Activated CD8-positive, alpha-beta T cell treated with anti-CD3 and anti-CD28 coated beads for 36 hours (primary cell): ENCODE measurements at regions of chr6 and their contacts with region 1.

Region 1: DNA sequence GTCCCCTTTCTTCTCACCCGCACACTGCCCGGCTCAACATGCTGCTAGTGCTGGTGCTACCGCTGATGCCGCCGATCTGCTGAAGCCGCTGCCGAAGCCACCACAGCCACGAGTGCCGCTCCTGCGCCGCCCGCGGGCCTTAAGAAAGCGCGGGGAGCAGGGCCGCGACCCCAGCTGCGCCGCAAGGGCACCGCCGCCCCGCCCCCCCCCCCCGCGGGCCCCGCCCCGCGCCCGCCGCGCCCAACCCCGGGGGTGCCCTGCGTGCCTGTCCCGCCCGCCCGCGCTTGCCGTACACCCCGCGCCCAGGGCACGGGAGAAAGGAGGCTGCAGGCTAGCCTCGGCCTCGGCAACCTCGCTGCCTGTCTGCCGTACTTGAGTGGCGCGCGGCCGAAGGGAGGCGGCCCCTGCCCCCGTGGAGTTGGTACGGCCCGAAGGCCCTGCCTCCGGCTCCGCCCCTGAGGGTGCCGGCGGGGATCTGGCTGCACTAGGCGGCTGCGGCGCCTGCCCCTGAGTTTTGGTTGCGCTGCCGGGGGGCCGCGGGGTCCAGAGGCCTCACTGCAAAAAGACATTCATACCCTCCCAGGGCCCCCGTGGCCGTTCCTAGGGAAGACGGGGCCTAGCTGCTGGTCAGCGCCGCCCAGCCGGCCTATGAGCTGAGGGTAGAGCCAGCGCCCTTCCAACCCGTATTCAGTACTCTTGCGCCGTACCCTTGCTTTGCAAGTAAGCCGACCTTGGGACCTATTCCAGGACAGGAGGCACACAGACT is at the start of gene SOD2:
- DNase-seq: peak; percentile 85
- ATAC-seq: peak; percentile 81
- H3K4me3 Mint-ChIP-seq: peak within 1 kb of the TSS; percentile 88
- H3K27ac Mint-ChIP-seq: peak within 1 kb of the TSS; percentile 93
- H3K4me1 Mint-ChIP-seq: peaks cover 33% of the 10 kb centered on the region
- H3K27me3 Mint-ChIP-seq: no peaks in the 10 kb centered on the region
- CTCF ChIP-seq: no peak
- total RNA-seq, gene SOD2: 95.5 to 105 TPM

Region 2: DNA sequence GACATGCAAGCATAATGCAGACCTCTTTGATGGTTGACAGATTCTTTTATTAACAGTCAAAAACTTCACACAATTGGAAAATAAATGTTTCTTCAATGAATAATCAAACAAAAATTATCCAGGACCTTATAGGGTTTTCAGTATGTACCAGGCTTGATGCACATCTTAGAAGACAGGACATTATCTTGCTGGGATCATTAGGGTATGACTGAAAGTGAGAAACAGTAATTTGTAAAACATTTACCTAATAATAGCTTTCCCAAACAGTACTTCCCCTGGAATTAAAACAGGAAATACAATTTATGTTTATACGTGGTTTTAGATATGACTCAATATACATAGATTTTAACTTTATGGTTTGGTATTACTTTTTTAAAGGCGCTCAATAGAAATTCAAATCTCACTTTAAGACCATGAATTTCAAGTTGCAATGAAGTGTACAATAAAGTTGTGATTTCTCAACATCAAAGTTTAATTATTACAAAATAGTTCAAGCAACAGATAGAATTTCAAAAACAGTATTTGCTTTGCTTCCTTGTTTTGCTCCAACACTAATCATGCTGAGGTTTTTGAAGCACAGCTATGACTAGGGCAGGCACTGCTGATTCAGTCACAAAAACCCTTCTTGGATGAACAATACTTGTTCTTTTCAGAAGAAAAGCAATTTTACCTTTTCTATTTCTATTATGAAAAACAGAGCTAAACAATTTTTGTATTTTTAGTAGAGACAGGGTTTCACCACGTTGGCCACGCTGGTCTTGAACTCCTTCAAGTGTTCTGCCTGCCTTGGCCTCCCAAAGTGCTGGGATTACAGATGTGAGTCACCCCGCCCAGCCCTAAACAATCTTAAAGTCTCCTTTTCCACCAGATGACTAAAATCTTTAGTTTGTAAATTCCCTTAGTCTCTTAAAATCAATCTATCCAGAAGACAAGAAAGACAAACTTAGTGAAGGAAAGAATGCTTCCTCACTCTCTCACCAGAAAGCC is 13.9 kb before region 1 on chr6:
- CTCF ChIA-PET with region 1: interaction called, 11 read pairs
- POLR2A ChIA-PET with region 1: interaction called, 27 read pairs
- intact Hi-C with region 1: no loop called
- DNase-seq: peak; percentile 30
- ATAC-seq: peak; percentile 64
- H3K4me3 Mint-ChIP-seq: no peak overlapping the region
- H3K27ac Mint-ChIP-seq: peak overlapping the region; percentile 65
- H3K4me1 Mint-ChIP-seq: peaks cover 21% of the 10 kb centered on the region
- H3K27me3 Mint-ChIP-seq: no peaks in the 10 kb centered on the region
- CTCF ChIP-seq: no peak

Region 3: GRCh38 chr6:159726918-159727716 is 33.8 kb after region 1 on chr6 and contains the start of gene WTAP:
- CTCF ChIA-PET with region 1: interaction called, 23 read pairs
- POLR2A ChIA-PET with region 1: interaction called, 41 read pairs
- intact Hi-C with region 1: loop called (anchors 2 kb)
- DNase-seq: peak; percentile 97
- ATAC-seq: peak; percentile 93
- H3K4me3 Mint-ChIP-seq: peak within 1 kb of the TSS; percentile 85
- H3K27ac Mint-ChIP-seq: peak within 1 kb of the TSS; percentile 95
- H3K4me1 Mint-ChIP-seq: peaks cover 44% of the 10 kb centered on the region
- H3K27me3 Mint-ChIP-seq: no peaks in the 10 kb centered on the region
- CTCF ChIP-seq: no peak
- total RNA-seq, gene WTAP: 79.9 to 80.6 TPM

Region 4: DNA sequence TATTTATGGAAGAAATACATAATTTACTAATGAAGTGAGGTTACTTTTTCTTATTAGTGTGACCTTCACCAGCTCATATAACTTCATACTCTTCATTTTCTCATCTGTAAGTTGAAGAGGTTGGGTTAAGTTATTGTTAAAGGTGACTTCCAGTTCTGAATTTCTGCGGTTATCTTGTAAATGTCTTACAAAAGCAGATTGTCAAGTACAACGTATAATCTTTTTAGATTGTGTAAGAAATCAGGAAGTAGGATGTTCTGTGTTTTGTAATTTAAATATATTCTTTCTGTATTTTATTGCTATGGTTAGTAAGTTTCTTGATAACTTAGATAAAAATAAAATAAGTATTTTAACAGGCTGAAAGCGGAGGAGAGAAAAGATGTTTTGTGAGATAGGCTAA is 46.0 kb after region 1 on chr6:
- CTCF ChIA-PET with region 1: interaction called, 9 read pairs
- POLR2A ChIA-PET with region 1: interaction called, 14 read pairs
- intact Hi-C with region 1: no loop called
- DNase-seq: no peak
- ATAC-seq: no peak
- H3K4me3 Mint-ChIP-seq: no peak overlapping the region
- H3K27ac Mint-ChIP-seq: no peak overlapping the region
- H3K4me1 Mint-ChIP-seq: peaks cover 25% of the 10 kb centered on the region
- H3K27me3 Mint-ChIP-seq: no peaks in the 10 kb centered on the region
- CTCF ChIP-seq: no peak

Region 5: DNA sequence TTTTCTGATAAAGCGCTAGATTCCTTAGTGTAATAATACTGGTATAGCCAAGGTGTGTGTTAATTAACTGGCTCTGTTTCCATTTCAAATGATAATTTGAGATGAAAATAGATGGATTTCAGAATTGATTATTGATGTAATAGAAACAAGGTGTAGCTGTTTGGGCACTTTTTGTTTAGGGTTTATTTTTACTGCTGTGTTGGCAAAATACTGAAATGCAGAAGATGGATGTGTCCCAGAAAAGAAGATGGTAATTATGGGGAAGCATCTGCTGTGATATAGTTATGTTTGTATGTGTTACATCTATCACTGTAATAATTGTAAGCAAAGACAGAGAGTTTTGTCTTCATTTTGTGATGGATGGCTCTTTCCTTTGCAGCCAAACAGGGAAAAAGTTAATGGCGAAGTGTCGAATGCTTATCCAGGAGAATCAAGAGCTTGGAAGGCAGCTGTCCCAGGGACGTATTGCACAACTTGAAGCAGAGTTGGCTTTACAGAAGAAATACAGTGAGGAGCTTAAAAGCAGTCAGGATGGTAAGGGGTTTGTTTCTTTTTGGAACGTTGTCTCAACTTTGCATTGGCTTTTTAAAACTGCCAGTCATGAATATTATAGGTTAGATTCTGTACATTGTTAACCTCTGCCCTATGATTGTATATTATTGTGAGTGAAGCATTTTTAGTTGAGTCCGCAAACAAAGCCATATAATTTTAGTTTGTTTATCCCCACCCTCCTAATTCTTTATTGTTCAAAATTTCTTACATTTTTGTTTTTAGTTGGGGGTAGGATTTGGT is 60.0 kb after region 1 on chr6:
- CTCF ChIA-PET with region 1: interaction called, 11 read pairs
- POLR2A ChIA-PET with region 1: no interaction called
- intact Hi-C with region 1: no loop called
- DNase-seq: no peak
- ATAC-seq: no peak
- H3K4me3 Mint-ChIP-seq: no peak overlapping the region
- H3K27ac Mint-ChIP-seq: peak overlapping the region; percentile 46
- H3K4me1 Mint-ChIP-seq: peaks cover 9% of the 10 kb centered on the region
- H3K27me3 Mint-ChIP-seq: no peaks in the 10 kb centered on the region
- CTCF ChIP-seq: no peak

Region 6: GRCh38 chr6:159761873-159762680 is 68.8 kb after region 1 on chr6 and contains the start of gene ACAT2:
- CTCF ChIA-PET with region 1: interaction called, 7 read pairs
- POLR2A ChIA-PET with region 1: interaction called, 13 read pairs
- intact Hi-C with region 1: loop called (anchors 5 kb)
- DNase-seq: peak; percentile 96
- ATAC-seq: peak; percentile 95
- H3K4me3 Mint-ChIP-seq: peak within 1 kb of the TSS; percentile 97
- H3K27ac Mint-ChIP-seq: peak within 1 kb of the TSS; percentile 98
- H3K4me1 Mint-ChIP-seq: peaks cover 29% of the 10 kb centered on the region
- H3K27me3 Mint-ChIP-seq: no peaks in the 10 kb centered on the region
- CTCF ChIP-seq: no peak
- total RNA-seq, gene ACAT2: 70.8 to 74.1 TPM

Region 7: GRCh38 chr6:159941286-159942113 is 248.2 kb after region 1 on chr6:
- CTCF ChIA-PET with region 1: interaction called, 4 read pairs
- POLR2A ChIA-PET with region 1: no interaction called
- intact Hi-C with region 1: loop called (anchors 10 kb)
- DNase-seq: peak; percentile 61
- ATAC-seq: peak; percentile 92
- H3K4me3 Mint-ChIP-seq: no peak overlapping the region
- H3K27ac Mint-ChIP-seq: no peak overlapping the region
- H3K4me1 Mint-ChIP-seq: peaks cover 5% of the 10 kb centered on the region
- H3K27me3 Mint-ChIP-seq: no peaks in the 10 kb centered on the region
- CTCF ChIP-seq: peak; percentile 42